ENCODE measurements at regions of chr1 and their contacts with region 1.

Region 1: DNA sequence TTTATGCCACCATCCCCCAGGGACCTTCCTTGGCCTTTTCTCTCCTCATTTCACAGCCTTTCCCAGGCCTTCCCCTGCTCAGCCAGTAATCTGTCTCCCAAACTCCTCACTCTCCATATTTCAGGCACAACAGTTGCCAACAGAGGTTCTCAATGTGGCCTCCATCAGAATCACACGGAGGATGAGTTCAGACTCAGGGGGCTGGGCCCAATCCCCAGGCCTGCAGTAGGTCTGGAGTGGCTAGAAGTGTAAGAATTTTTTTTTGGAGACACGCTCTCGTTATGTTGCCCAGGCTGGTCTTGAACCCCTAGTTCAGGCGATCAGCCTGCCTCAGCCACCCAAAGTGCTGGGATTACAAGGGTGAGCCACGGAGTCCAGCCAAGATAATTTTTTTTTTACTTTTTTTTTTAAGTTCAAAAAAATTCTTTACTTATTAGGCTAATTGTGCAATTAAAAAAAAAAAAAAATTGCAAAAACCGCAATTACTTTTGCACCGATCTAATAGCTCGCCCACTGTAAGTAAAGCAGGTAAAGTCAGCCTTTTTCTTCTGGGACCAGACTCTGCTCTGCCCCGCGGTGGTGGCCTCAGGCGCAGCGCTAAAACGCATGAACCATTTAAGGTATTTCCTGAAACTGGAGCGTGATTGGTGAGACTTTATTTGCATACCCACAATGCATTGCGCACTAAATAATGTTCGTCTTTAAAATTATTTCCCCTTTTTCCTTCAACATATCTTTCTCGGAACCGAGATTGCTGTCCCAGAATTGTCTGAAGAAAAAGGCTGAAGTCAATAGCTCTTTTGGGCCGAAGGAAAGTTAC is 18.7 kb downstream of the KIAA2013 start:
- DNase-seq: peak; percentile 86 to 88
- H3K4me3 ChIP-seq: peak overlapping the region; percentile 36; the same call in 1 of the 2 replicates
- H3K27ac ChIP-seq: peak overlapping the region; percentile 98
- H3K4me1 ChIP-seq: peaks cover 4% of the 10 kb centered on the region; the same call in 1 of the 2 replicates
- H3K27me3 ChIP-seq: no peaks in the 10 kb centered on the region
- CTCF ChIP-seq: peak; percentile 46; the same call in 1 of the 2 replicates

Region 2: DNA sequence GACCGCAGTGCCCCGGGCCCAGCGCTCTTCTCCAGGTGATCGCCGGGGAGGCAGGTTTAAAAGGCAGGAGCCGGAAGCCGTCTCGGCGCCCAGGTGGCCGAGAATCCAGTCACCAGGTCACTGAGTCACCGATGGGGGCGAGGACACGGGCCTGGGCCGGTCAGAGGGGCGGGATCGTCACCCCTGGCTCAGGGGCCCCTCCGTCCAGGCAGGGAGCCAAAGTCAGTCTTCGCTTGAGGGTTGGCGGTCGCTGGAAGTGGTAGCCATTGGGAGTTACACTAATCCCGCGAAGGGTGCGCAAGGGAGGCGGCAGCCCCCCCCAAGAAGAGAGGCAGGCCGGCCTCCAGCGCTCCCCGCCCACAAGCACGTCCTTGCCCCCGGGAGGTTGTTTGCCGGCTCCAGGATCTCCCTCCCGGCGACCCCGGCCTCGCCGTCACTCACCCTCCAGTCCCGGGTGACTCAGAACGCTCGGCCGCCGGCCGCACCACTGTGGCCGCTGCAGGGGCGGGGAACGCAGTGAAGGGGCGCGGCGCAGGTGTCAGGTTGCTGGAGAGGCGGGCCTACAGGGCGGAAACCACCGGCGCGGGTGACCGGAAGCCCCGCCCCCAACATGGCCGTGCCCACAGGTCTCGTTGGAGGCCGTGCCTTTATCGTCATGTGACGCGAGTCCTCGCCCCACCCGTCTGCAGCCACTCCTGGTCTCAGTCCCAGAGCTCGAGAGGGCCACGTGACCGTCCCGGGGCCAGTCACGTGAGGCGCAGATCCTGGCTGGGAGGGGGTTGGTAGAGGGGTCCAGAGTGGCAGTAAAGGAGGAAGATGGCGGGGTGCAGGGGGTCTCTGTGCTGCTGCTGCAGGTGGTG is 101.8 kb before region 1 on chr1 and contains the starts of genes CLCN6 and MTHFR:
- CTCF ChIA-PET with region 1: no interaction called
- POLR2A ChIA-PET with region 1: interaction called, 11 read pairs
- intact Hi-C with region 1: no loop called
- DNase-seq: peak; percentile 92 to 100
- H3K4me3 ChIP-seq: peak within 1 kb of the TSS; percentile 87
- H3K27ac ChIP-seq: peak within 1 kb of the TSS; percentile 82
- H3K4me1 ChIP-seq: peaks cover 27% of the 10 kb centered on the region; the same call in 1 of the 2 replicates
- H3K27me3 ChIP-seq: no peaks in the 10 kb centered on the region
- CTCF ChIP-seq: no peak
- total RNA-seq, gene CLCN6: 14.8 and 16.7 TPM in 2 replicates
- total RNA-seq, gene MTHFR: 15.8 and 22.2 TPM in 2 replicates

Region 3: DNA sequence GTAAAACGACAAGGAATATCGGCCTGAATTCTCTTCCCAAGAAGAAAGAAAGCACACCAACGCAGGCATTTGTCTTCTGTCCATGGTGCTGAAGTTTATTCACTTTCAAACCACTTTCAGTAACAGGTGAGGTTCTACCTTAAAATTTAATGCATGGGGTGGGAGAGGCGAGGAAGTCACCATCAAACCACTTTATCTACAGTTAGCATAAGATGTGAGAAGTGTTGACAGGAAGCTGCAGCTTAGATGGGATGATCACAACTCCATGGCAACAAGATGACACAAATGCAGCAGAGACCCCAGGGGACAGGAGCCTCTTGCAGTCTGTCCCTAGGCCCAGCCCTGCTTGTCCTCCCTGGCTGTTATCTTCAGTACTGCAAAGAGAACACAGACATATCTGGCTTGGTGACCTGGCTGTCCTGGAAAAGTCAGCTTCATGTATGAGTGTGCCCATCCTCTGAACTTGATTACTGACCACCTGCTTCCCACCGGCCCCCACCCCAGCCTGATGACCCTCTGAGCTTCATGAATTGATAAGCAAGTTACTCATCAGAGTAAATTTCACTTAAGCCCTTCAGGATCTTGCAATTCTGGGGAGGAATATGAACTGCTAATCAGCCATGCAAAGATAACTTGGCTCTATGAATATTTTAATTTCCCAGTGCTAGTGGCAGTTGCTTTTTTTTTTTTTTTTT is 61.7 kb before region 1 on chr1:
- CTCF ChIA-PET with region 1: no interaction called
- POLR2A ChIA-PET with region 1: interaction called, 10 read pairs
- intact Hi-C with region 1: no loop called
- DNase-seq: no peak
- H3K4me3 ChIP-seq: no peak overlapping the region
- H3K27ac ChIP-seq: no peak overlapping the region
- H3K4me1 ChIP-seq: no peaks in the 10 kb centered on the region
- H3K27me3 ChIP-seq: peaks cover 12% of the 10 kb centered on the region; the same call in 1 of the 2 replicates
- CTCF ChIP-seq: no peak

Region 4: GRCh38 chr1:11925938-11926292 is 18.4 kb after region 1 on chr1:
- CTCF ChIA-PET with region 1: interaction called, 17 read pairs
- POLR2A ChIA-PET with region 1: interaction called, 6 read pairs
- intact Hi-C with region 1: no loop called
- DNase-seq: peak in 1 of 2 experiments; percentile 12
- H3K4me3 ChIP-seq: peak overlapping the region; percentile 59; the same call in 1 of the 2 replicates
- H3K27ac ChIP-seq: no peak overlapping the region
- H3K4me1 ChIP-seq: peaks cover 12% of the 10 kb centered on the region; the same call in 1 of the 2 replicates
- H3K27me3 ChIP-seq: no peaks in the 10 kb centered on the region
- CTCF ChIP-seq: no peak

Region 5: DNA sequence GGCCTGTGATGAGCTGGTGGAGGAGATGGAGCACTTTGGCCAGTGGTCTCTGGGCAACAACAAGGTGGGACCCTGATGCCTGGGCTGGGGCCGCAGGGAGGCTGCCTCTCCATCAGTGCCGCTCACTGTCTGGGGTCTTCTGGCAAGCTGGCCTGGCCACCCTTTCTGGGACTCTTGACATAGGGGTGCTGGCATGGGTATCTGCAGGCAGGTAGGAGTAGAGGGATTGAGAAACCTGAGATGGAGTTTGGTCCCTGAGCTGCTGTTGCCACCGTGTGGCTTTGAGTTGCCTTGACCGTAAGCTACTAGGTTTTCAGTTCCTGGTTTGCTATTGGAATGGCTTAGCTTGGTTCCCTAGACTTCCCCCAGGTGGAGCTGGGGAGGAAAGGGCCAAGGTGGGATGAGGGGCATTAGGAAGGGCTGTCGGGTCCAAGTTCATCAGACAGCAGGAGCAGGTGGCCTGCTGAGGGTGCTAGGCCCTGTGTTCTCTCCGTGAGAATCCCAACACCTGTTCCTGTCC is 59.6 kb after region 1 on chr1:
- CTCF ChIA-PET with region 1: no interaction called
- POLR2A ChIA-PET with region 1: interaction called, 16 read pairs
- intact Hi-C with region 1: loop called (anchors 1 kb)
- DNase-seq: peak; percentile 41 to 42
- H3K4me3 ChIP-seq: no peak overlapping the region
- H3K27ac ChIP-seq: no peak overlapping the region
- H3K4me1 ChIP-seq: peaks cover 6% of the 10 kb centered on the region; the same call in 1 of the 2 replicates
- H3K27me3 ChIP-seq: no peaks in the 10 kb centered on the region
- CTCF ChIP-seq: peak; percentile 68

Region 6: DNA sequence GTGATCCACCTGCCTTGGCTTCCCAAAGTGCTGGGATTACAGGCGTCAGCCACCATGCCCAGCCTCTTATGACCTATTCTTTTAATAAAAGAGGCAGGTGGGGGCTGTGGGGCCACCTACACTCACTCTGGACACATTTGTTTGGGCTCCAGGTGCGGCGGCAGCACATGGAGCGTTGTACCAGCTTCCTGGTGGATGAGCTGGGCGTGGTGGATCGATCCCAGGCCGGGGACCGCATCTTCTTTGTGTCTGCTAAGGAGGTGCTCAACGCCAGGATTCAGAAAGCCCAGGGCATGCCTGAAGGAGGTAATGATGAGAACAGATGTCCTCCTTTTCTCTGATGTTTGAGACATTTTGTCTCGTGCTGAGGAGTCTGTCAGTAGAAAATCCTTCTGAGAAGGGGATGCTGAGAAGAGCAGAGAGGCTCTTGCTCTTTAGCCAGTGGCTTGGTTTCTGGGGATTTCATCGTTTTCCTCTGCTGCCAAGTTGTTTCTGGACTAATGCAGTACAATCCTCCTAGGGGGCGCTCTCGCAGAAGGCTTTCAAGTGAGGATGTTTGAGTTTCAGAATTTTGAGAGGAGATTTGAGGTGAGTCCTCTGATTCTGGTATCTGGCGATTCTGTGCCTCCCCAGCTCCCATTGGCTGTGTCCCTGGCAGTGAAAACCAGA is 93.9 kb after region 1 on chr1:
- CTCF ChIA-PET with region 1: interaction called, 3 read pairs
- POLR2A ChIA-PET with region 1: interaction called, 33 read pairs
- intact Hi-C with region 1: no loop called
- DNase-seq: no peak
- H3K4me3 ChIP-seq: no peak overlapping the region
- H3K27ac ChIP-seq: peak overlapping the region; percentile 39; the same call in 1 of the 2 replicates
- H3K4me1 ChIP-seq: no peaks in the 10 kb centered on the region
- H3K27me3 ChIP-seq: no peaks in the 10 kb centered on the region
- CTCF ChIP-seq: peak; percentile 56

Region 7: GRCh38 chr1:12528021-12528852 is 620.8 kb after region 1 on chr1:
- CTCF ChIA-PET with region 1: no interaction called
- POLR2A ChIA-PET with region 1: interaction called, 16 read pairs
- intact Hi-C with region 1: no loop called
- DNase-seq: peak; percentile 37 to 82
- H3K4me3 ChIP-seq: no peak overlapping the region
- H3K27ac ChIP-seq: peak overlapping the region; percentile 62
- H3K4me1 ChIP-seq: peaks cover 49% of the 10 kb centered on the region
- H3K27me3 ChIP-seq: no peaks in the 10 kb centered on the region
- CTCF ChIP-seq: no peak